Common myeloid progenitor, CD34-positive (primary cell): ENCODE measurements at regions of chr9 and their contacts with region 1.

Region 1: GRCh38 chr9:37407470-37407869 is 15.0 kb upstream of the GRHPR start:
- DNase-seq: peak in 2 of 3 donors; percentile 43 to 45
- H3K4me3 ChIP-seq: no peak overlapping the region
- H3K27ac ChIP-seq: no peak overlapping the region
- H3K4me1 ChIP-seq: no peaks in the 10 kb centered on the region
- H3K27me3 ChIP-seq: no peaks in the 10 kb centered on the region

Region 2: DNA sequence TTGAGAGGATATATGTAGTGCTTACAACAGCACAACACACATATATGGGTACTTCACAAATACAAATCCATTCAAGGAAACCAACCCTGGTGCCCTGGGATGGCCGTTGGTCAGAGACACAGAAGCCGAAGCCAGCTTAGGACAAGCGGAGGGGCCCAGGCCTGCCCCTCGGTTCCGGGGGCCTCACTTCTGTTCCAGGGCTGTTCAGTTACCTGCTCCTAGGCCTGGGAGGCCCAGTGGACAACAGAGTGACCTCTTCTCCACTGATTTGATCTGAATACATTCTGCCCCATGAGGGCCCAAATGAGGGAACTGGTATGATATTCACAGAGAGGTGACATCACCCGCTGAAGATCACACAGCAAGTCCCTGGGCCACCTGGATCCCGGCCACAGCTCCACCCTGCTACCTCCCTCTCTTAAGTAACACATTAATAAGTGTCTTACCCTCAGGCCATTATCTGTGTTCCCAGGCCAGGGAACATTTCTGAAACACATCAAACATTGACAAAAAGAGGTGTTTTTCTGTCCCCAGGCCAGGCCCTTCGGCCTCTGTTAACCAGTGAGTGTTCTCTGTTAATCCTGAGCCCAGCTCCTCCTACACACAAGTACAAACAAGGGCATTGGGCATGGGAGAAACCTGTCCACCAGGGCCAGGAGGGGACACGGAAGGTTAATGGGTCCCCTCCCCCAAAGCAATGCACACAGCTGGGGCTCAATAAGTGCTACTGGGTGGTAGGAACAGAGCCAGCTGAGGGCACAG is 10.6 kb after region 1 on chr9:
- CTCF ChIA-PET with region 1: interaction called, 10 read pairs
- POLR2A ChIA-PET with region 1: no interaction called
- DNase-seq: no peak
- H3K4me3 ChIP-seq: no peak overlapping the region
- H3K27ac ChIP-seq: no peak overlapping the region
- H3K4me1 ChIP-seq: peaks cover 0 to 13% (median 10%) of the 10 kb centered on the region in 4 experiments
- H3K27me3 ChIP-seq: no peaks in the 10 kb centered on the region